CD4-positive, alpha-beta memory T cell (primary cell): ENCODE measurements at regions of chr6 and their contacts with region 1.

Region 1: GRCh38 chr6:142207265-142207877 is 60.3 kb downstream of the VTA1 start:
- DNase-seq: peak; percentile 27 to 42 (median 33)
- H3K4me3 ChIP-seq: no peak overlapping the region
- H3K4me3 Mint-ChIP-seq: no peak overlapping the region
- H3K27ac ChIP-seq: no peak overlapping the region
- H3K27ac Mint-ChIP-seq: peak overlapping the region in 2 of 7 donors; percentile 35 to 74
- H3K4me1 ChIP-seq: no peaks in the 10 kb centered on the region
- H3K4me1 Mint-ChIP-seq: peaks cover 0 to 5% (median 2%) of the 10 kb centered on the region in 4 donors
- H3K27me3 ChIP-seq: no peaks in the 10 kb centered on the region
- H3K27me3 Mint-ChIP-seq: no peaks in the 10 kb centered on the region

Region 2: GRCh38 chr6:142195862-142196541 is 11.4 kb before region 1 on chr6:
- CTCF ChIA-PET with region 1: interaction called, 14 read pairs
- POLR2A ChIA-PET with region 1: no interaction called
- intact Hi-C with region 1: no loop called
- DNase-seq: no peak
- H3K4me3 ChIP-seq: no peak overlapping the region
- H3K4me3 Mint-ChIP-seq: no peak overlapping the region
- H3K27ac ChIP-seq: no peak overlapping the region
- H3K27ac Mint-ChIP-seq: peak overlapping the region in 4 of 7 donors; percentile 2 to 42 (median 33)
- H3K4me1 ChIP-seq: peaks cover 22% of the 10 kb centered on the region
- H3K4me1 Mint-ChIP-seq: peaks cover 26 to 49% (median 37%) of the 10 kb centered on the region in 4 donors
- H3K27me3 ChIP-seq: no peaks in the 10 kb centered on the region
- H3K27me3 Mint-ChIP-seq: no peaks in the 10 kb centered on the region

Region 3: GRCh38 chr6:142218446-142218845 is 11.1 kb after region 1 on chr6:
- CTCF ChIA-PET with region 1: interaction called, 13 read pairs
- POLR2A ChIA-PET with region 1: no interaction called
- intact Hi-C with region 1: no loop called
- DNase-seq: no peak
- H3K4me3 ChIP-seq: no peak overlapping the region
- H3K4me3 Mint-ChIP-seq: no peak overlapping the region
- H3K27ac ChIP-seq: no peak overlapping the region
- H3K27ac Mint-ChIP-seq: no peak overlapping the region
- H3K4me1 ChIP-seq: no peaks in the 10 kb centered on the region
- H3K4me1 Mint-ChIP-seq: peaks cover 0 to 2% (median 0%) of the 10 kb centered on the region in 4 donors
- H3K27me3 ChIP-seq: no peaks in the 10 kb centered on the region
- H3K27me3 Mint-ChIP-seq: no peaks in the 10 kb centered on the region